ENCODE measurements at regions of chr18 and their contacts with region 1.

Region 1: DNA sequence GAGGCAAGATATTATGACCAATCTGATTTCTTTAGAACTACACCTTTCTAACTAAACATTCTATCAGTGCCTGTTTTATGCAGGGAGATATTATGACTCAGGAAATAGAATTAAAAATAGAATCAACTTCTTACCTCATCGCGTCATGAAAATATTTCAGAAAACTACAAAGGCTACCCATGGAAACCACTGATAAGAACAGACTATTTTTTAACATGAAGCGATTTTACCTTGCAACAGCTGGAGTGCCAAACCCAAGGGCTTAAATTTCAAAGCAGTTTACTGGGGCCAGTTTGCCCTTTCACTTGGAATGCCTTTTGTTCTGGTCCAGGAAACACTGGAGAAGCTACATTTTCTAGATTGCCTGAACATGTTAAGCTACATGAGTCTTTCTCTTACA is 304.8 kb upstream of the CCDC68 start:
- DNase-seq: no peak
- ATAC-seq: no peak
- H3K4me3 ChIP-seq: no peak overlapping the region
- H3K27ac ChIP-seq: no peak overlapping the region
- H3K4me1 ChIP-seq: no peaks in the 10 kb centered on the region
- H3K27me3 ChIP-seq: no peaks in the 10 kb centered on the region
- CTCF ChIP-seq: no peak
- POLR2A ChIP-seq: no peak
- RAD21 ChIP-seq: no peak

Region 2: DNA sequence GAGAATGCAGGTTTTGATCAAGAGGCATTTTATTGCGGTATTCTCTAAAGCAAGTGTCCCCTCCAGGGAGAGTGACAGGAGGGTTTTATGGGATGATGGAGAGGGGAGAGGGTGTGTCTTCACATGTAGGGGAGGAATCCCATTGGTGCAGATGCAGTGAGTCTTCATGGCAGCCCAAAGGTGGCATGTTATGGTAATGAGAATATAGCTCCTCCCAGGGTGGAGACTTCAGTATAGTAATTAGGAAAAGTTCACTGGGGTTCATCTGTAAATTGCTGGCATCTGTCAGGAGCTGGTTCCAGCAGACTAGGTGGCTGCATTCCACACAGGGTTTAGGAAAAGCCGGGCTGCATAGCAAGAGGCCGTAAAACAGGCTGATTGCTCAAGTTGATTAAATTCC is 74.1 kb before region 1 on chr18:
- CTCF ChIA-PET with region 1: no interaction called
- POLR2A ChIA-PET with region 1: no interaction called
- RAD21 ChIA-PET with region 1: no interaction called
- intact Hi-C with region 1: no loop called
- DNase-seq: no peak
- ATAC-seq: no peak
- H3K4me3 ChIP-seq: no peak overlapping the region
- H3K27ac ChIP-seq: no peak overlapping the region
- H3K4me1 ChIP-seq: no peaks in the 10 kb centered on the region
- H3K27me3 ChIP-seq: peaks cover 28% of the 10 kb centered on the region
- CTCF ChIP-seq: no peak
- POLR2A ChIP-seq: no peak
- RAD21 ChIP-seq: no peak

Region 3: GRCh38 chr18:55314615-55315237 is 50.6 kb after region 1 on chr18:
- CTCF ChIA-PET with region 1: no interaction called
- POLR2A ChIA-PET with region 1: no interaction called
- RAD21 ChIA-PET with region 1: no interaction called
- intact Hi-C with region 1: loop called (anchors 5 kb)
- DNase-seq: no peak
- ATAC-seq: no peak
- H3K4me3 ChIP-seq: no peak overlapping the region
- H3K27ac ChIP-seq: no peak overlapping the region
- H3K4me1 ChIP-seq: no peaks in the 10 kb centered on the region
- H3K27me3 ChIP-seq: no peaks in the 10 kb centered on the region
- CTCF ChIP-seq: no peak
- POLR2A ChIP-seq: no peak
- RAD21 ChIP-seq: no peak

Region 4: DNA sequence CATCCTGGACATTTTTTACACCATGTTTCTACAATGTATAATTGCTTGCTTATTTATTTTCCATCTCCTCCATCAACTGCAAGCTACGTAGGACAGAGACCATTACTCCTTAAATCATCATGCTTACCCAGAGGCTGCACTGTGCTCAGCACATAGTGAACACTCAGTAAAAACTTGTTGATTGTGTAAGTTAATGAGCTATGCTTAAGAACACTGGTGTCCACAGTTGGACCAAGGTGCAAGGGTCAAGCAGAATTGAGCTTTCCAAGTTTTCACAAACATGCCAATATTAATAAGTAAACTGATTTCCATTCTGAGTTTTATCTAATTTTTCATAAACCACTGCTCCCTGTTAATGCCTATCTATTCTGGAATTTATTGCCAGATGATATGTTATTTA is 788.1 kb after region 1 on chr18:
- CTCF ChIA-PET with region 1: no interaction called
- POLR2A ChIA-PET with region 1: no interaction called
- RAD21 ChIA-PET with region 1: no interaction called
- intact Hi-C with region 1: no loop called
- DNase-seq: no peak
- ATAC-seq: no peak
- H3K4me3 ChIP-seq: no peak overlapping the region
- H3K27ac ChIP-seq: no peak overlapping the region
- H3K4me1 ChIP-seq: no peaks in the 10 kb centered on the region
- H3K27me3 ChIP-seq: no peaks in the 10 kb centered on the region
- CTCF ChIP-seq: no peak
- POLR2A ChIP-seq: no peak
- RAD21 ChIP-seq: no peak

Measured in HCT116 (cell line).